H1 (cell line): ENCODE measurements at regions of chr1 and their contacts with region 1.

Region 1: DNA sequence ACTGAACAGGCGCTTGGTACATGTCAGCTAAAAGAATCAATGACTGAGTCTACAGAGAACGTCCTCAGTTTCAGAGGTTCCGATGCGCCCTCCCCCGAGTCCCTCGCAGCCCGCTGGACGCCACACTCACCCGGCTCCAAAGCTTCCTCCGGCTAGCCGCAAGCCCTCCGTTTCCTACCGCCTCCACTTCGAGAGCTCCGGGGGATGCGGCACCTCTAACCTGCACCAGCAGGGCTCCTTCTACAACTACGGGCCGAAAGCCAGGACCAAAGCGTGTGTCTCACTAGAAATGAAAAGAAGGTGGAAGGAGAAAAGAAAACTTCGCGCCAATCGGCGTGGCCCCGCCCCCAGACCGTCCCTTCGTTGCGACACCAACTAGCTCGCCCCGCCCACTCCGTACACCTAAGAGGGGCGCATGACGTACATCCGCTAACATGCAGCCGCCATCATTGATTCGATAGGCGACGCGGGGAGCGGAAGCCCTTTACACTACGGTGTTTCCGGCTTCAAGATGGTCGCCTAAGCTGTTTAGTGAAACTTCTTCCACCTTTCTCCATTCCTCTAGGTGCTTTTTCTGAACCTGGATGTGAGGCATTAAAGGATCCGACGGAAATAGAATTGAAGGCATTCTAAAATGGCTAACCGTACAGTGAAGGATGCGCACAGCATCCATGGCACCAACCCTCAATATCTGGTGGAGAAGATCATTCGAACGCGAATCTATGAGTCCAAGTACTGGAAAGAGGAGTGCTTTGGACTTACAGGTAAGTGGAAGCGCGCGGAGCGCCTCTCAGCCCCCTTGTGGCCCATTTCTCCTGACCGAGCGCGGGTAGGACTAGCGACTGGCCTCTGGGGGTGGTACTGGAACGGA is at the starts of genes ORC1 and PRPF38A:
- DNase-seq: peak; percentile 92 to 98
- H3K4me3 ChIP-seq: peak within 1 kb of the TSS; percentile 89 to 94 (median 91)
- H3K27ac ChIP-seq: peak within 1 kb of the TSS; percentile 97
- H3K4me1 ChIP-seq: peaks cover 0 to 7% (median 0%) of the 10 kb centered on the region in 4 experiments; a peak in 1 of 7 replicates
- H3K27me3 ChIP-seq: no peaks in the 10 kb centered on the region
- CTCF ChIP-seq: peak; percentile 53 to 87 (median 60)
- EP300 ChIP-seq: no peak
- POLR2A ChIP-seq: peak; percentile 94 to 97
- RAD21 ChIP-seq: peak; percentile 32 to 39; a peak in 3 of 4 replicates
- total RNA-seq, gene ORC1: 49.0 and 49.7 TPM in 2 replicates
- total RNA-seq, gene PRPF38A: 70.6 and 76.2 TPM in 2 replicates

Region 2: DNA sequence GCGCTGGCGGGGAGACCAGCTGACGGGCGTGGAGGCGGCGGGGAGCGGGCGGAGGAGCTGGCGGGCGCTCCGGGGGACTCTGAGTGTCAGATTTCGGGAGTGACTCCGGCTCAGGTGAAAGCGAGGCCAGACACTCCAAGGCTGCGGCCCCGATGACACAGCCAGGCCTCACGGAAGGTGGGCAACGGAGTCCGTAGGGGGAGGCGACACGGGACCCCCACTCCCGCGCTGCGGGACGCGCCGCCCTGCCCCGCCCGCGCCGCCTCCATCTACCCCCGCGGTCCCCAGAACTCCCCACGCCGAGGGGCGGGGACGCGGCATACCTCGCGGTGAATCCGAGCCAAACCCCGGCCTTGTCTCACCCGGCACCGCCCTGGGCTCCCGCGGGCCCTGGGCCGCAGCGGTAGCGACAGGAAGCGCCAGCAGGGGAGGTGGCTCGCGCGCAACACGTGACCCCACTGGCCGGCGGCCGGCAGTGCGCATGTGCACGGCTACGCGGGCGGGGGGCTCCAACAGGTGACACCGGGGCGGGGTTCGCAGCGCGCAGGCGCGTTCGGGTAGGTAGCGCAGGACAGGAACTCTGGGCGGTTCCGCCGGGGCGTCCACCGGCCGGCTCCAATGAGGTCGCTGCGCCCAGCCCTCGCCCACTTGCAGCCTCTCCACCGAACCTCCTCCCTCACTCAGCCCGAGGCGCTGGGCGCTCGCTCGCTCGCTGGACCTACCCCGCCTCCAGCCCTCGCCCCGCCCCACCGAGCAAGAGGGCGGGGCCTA is 38.4 kb before region 1 on chr1 and contains the start of gene CC2D1B:
- CTCF ChIA-PET with region 1: interaction called, 3 read pairs
- POLR2A ChIA-PET with region 1: interaction called, 46 read pairs
- DNase-seq: peak; percentile 99 to 100
- H3K4me3 ChIP-seq: peak within 1 kb of the TSS; percentile 76 to 92 (median 86)
- H3K27ac ChIP-seq: peak within 1 kb of the TSS; percentile 20; the same call in 1 of the 2 replicates
- H3K4me1 ChIP-seq: peaks cover 0 to 9% (median 5%) of the 10 kb centered on the region in 4 experiments
- H3K27me3 ChIP-seq: no peaks in the 10 kb centered on the region
- CTCF ChIP-seq: no peak
- EP300 ChIP-seq: no peak
- POLR2A ChIP-seq: peak in 1 of 2 experiments; percentile 80; a peak in 2 of 3 replicates
- RAD21 ChIP-seq: no peak; a peak in 1 of 4 replicates
- total RNA-seq, gene CC2D1B: 13.1 and 13.8 TPM in 2 replicates

Region 3: DNA sequence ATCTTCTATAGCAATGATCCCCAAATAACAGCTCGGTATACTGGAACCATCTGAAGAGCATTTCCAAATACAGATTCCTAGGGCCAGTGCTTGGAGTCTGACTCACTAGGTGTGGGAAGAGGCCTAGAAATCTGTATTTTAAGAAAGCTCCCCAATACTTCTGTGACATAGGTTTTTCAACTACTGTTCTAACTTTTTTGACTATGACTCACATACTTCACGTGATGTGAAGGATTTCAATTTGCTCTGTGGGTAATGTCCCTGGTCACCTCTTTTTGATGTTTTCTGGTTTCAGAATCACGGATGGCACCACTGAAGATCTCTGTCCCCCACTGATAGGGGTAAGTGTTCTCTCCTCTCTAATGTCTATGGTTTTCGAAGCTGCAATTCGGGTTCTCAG is 11.2 kb before region 1 on chr1:
- CTCF ChIA-PET with region 1: interaction called, 3 read pairs
- POLR2A ChIA-PET with region 1: interaction called, 24 read pairs
- DNase-seq: no peak
- H3K4me3 ChIP-seq: no peak overlapping the region
- H3K27ac ChIP-seq: no peak overlapping the region
- H3K4me1 ChIP-seq: no peaks in the 10 kb centered on the region
- H3K27me3 ChIP-seq: no peaks in the 10 kb centered on the region; a peak in 1 of 7 replicates
- CTCF ChIP-seq: no peak
- EP300 ChIP-seq: no peak
- POLR2A ChIP-seq: no peak
- RAD21 ChIP-seq: no peak

Region 4: DNA sequence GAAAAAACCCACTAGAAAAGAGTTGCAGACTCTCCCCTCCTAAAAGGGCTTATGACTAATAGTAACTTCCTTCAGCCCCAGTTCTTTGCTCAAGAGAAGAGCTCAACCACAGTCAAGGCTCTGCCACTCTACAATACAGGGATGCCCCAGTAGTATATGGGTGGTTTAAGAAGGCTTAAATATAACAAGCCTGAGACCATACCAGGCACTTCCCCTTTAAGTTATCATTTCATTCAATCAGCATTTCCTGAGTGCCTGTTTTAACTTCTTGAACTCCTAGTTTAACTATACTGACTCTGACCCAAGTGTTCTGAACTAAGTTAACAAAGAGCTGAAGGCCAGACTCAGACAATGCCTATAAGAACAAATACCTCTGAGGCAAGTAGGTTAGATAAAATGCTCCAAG is 19.9 kb after region 1 on chr1:
- CTCF ChIA-PET with region 1: interaction called, 5 read pairs
- POLR2A ChIA-PET with region 1: interaction called, 82 read pairs
- DNase-seq: no peak
- H3K4me3 ChIP-seq: no peak overlapping the region
- H3K27ac ChIP-seq: no peak overlapping the region
- H3K4me1 ChIP-seq: no peaks in the 10 kb centered on the region; a peak in 1 of 7 replicates
- H3K27me3 ChIP-seq: no peaks in the 10 kb centered on the region
- CTCF ChIP-seq: no peak
- EP300 ChIP-seq: no peak
- POLR2A ChIP-seq: no peak
- RAD21 ChIP-seq: no peak

Region 5: GRCh38 chr1:52552505-52553361 is 148.4 kb after region 1 on chr1 and contains the start of gene TUT4:
- CTCF ChIA-PET with region 1: no interaction called
- POLR2A ChIA-PET with region 1: interaction called, 12 read pairs
- DNase-seq: peak; percentile 84 to 85
- H3K4me3 ChIP-seq: peak within 1 kb of the TSS; percentile 75 to 94 (median 87)
- H3K27ac ChIP-seq: peak within 1 kb of the TSS; percentile 96
- H3K4me1 ChIP-seq: peaks cover 3 to 11% (median 9%) of the 10 kb centered on the region in 4 experiments; a peak in 5 of 7 replicates
- H3K27me3 ChIP-seq: no peaks in the 10 kb centered on the region
- CTCF ChIP-seq: no peak
- EP300 ChIP-seq: no peak
- POLR2A ChIP-seq: no peak; a peak in 1 of 3 replicates
- RAD21 ChIP-seq: peak; percentile 4 to 16; a peak in 2 of 4 replicates
- total RNA-seq, gene TUT4: 63.3 and 63.8 TPM in 2 replicates

Region 6: DNA sequence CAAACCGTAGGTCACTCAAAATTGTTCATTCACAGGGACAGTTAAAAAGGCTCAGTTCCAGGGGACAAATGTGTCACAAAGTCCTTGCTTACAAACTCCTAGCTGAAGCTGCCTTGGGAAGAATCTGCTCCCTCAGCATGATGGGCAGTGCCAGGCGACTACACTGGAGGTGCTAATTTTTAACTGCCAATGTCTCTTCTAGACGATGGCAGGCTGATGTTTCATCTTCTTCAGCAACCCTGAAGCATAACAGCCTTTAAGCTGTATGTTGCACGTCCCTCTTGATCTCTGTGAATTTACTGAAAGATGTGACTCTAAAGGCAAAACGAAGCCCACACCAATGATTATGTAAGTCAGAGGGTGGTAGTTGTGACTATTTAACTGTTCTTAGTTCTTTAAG is 282.5 kb after region 1 on chr1:
- CTCF ChIA-PET with region 1: interaction called, 5 read pairs
- POLR2A ChIA-PET with region 1: interaction called, 14 read pairs
- DNase-seq: no peak
- H3K4me3 ChIP-seq: no peak overlapping the region
- H3K27ac ChIP-seq: no peak overlapping the region
- H3K4me1 ChIP-seq: no peaks in the 10 kb centered on the region
- H3K27me3 ChIP-seq: no peaks in the 10 kb centered on the region
- CTCF ChIP-seq: no peak
- EP300 ChIP-seq: no peak
- POLR2A ChIP-seq: no peak
- RAD21 ChIP-seq: no peak